ENCODE measurements at regions of chr11 and their contacts with region 1.

Region 1: DNA sequence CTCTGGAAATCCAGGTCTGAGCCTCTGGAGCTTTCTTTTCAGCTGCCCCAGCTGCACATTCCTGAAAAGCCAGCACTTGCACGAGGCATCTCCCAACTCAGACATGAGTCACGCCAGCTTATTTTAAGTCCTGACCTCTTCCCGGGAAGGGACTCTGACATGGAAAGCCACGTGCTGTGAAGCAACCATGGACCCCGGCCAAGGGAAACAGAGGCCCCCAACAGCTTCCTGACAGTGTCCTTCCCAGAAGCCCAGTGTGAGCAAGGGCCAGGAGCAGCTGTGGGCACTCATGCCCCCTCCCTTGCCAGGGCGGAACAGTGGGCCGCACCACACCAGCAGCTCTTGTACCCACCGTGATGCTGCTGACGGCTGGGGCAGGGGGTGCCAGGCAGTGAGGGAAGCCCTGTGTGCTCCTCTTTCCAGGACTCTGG is 118.8 kb upstream of the CADM1 start:
- DNase-seq: peak; percentile 68
- H3K4me3 ChIP-seq: no peak overlapping the region
- H3K27ac ChIP-seq: peak overlapping the region; percentile 5
- H3K4me1 ChIP-seq: peaks cover 34% of the 10 kb centered on the region
- H3K27me3 ChIP-seq: no peaks in the 10 kb centered on the region
- CTCF ChIP-seq: no peak

Region 2: GRCh38 chr11:115576606-115577380 is 46.2 kb before region 1 on chr11:
- CTCF ChIA-PET with region 1: no interaction called
- dilution Hi-C with region 1: no loop called
- in situ Hi-C with region 1: no loop called
- intact Hi-C with region 1: loop called (anchors 2 kb)
- DNase-seq: no peak
- H3K4me3 ChIP-seq: no peak overlapping the region
- H3K27ac ChIP-seq: peak overlapping the region; percentile 27
- H3K4me1 ChIP-seq: peaks cover 57% of the 10 kb centered on the region
- H3K27me3 ChIP-seq: no peaks in the 10 kb centered on the region
- CTCF ChIP-seq: no peak

Measured in mammary epithelial cell (primary cell).